ENCODE measurements at regions of chr14 and their contacts with region 1.

Region 1: DNA sequence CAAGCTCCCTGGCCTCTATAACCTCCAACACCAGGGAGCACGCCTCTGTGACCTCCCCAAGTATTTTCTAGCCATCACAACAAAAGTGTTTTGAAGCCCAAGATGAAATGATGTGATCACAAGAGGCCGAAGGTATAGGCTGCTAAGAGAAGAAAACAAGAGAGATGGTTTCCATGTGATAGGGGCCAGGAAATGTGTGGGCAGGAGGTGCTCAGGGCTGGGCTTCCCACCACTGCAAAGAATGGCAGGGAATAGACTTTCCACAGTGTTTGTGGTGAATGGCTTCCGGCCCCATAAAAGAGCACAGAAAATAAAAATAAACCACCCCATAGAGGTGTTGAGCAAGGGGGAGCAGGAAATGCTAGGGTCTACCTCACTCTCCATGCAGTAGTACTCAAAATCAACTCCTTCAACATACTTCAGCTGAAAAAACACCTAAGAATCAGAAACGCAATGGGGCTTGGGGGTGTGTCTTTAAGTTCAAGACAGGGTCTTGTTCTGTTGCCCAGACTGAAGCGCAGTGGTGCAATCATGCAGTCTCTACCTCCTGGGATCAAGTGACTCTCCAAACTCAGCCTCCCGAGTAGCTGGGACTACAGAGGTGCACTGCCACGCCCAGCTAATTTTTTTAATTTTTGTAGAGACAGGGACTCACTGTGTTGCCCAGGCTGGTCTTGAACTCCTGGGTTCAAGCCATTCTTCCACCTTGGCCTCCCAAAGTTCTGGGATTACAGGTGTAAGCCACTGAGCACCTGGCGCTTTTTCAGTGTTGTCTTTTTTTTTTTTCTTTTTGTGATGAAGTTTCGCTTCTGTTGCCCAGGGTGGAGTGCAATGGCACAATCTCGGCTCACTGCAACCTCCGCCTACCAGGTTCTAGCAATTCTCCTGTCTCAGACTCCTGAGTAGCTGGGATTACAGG is 27.1 kb downstream of the DAD1 start:
- DNase-seq: peak; percentile 71
- ATAC-seq: peak; percentile 46 to 79
- H3K4me3 ChIP-seq: no peak overlapping the region
- H3K27ac ChIP-seq: peak overlapping the region; percentile 82
- H3K4me1 ChIP-seq: peaks cover 86% of the 10 kb centered on the region
- H3K27me3 ChIP-seq: no peaks in the 10 kb centered on the region
- CTCF ChIP-seq: no peak

Region 2: DNA sequence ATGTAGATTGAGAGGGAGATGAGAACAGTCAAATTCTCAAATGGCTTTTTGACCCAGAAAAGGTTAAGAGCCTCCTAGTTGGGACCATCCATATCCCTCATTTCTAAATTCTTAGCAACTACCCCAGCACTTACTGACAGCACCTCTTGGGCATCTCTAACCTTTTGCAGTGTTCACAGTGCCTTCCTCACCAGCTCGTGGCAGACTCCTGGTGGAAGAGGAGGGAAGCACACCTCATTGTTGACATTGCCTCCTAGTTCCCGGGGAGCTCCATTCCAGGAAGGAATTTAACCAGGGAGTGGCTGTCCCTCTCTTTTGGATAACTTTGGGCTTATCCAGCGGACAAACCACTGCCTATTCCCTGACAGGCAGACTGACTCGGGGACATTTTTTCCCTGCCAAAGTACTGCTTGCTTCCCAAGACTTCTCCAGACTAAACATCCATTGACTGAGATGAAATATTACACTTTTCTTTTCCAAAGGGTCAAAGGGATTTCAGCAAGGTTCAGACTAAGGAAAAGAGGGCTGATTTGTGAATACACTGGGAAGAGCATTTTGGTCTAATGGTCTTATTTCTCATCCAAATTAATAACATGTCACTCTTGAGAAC is 91.2 kb after region 1 on chr14:
- intact Hi-C with region 1: loop called (anchors 10 kb)
- DNase-seq: peak; percentile 55
- ATAC-seq: peak; percentile 88 to 93
- H3K4me3 ChIP-seq: no peak overlapping the region
- H3K27ac ChIP-seq: no peak overlapping the region
- H3K4me1 ChIP-seq: no peaks in the 10 kb centered on the region
- H3K27me3 ChIP-seq: no peaks in the 10 kb centered on the region
- CTCF ChIP-seq: peak; percentile 85